ENCODE measurements at regions of chr3 and their contacts with region 1.

Region 1: GRCh38 chr3:45760878-45761711 is 35.2 kb downstream of the SLC6A20 start:
- DNase-seq: peak; percentile 43 to 48
- H3K4me3 ChIP-seq: no peak overlapping the region
- H3K27ac ChIP-seq: no peak overlapping the region
- H3K4me1 ChIP-seq: no peaks in the 10 kb centered on the region
- H3K27me3 ChIP-seq: no peaks in the 10 kb centered on the region
- CTCF ChIP-seq: peak; percentile 81

Region 2: DNA sequence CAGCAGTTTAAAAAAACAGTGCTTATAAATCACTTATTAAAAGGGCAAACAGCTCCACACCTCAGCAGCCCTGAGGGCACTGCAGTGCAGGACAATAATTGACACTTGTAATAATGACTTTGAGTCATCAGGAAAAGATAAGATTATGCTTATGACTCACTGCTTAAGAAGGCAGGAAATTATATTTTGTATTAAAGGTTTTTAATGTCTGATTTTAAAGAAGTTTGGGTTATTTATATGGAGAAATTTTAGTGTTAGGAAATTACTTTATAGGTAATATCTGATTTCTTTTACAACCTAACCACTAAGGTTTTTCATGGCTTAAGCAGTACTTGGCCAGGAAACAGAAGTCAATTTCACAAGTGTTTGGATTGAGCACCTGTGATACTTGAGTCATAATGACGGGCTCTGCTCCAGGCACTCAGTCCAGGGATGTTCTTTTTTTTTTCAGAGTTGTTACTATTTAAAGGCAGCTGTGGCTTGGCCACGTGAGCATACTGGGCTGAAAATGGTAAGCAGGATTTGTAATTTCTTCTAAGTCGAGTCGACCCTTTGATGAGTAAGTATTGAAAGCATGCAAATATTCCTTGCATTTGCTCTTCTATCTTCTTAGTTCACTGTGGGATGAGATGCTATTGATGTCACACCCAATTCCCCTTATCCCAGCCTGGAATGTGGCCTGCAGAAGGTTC is 56.9 kb after region 1 on chr3:
- CTCF ChIA-PET with region 1: no interaction called
- POLR2A ChIA-PET with region 1: no interaction called
- intact Hi-C with region 1: loop called (anchors 5 kb)
- DNase-seq: peak; percentile 69 to 95
- H3K4me3 ChIP-seq: peak overlapping the region; percentile 23; the same call in 1 of the 2 replicates
- H3K27ac ChIP-seq: peak overlapping the region; percentile 94
- H3K4me1 ChIP-seq: peaks cover 42% of the 10 kb centered on the region
- H3K27me3 ChIP-seq: no peaks in the 10 kb centered on the region
- CTCF ChIP-seq: no peak

Region 3: GRCh38 chr3:45832691-45833090 is 71.6 kb after region 1 on chr3:
- CTCF ChIA-PET with region 1: interaction called, 5 read pairs
- POLR2A ChIA-PET with region 1: no interaction called
- intact Hi-C with region 1: loop called (anchors 1 kb)
- DNase-seq: no peak
- H3K4me3 ChIP-seq: no peak overlapping the region
- H3K27ac ChIP-seq: no peak overlapping the region
- H3K4me1 ChIP-seq: no peaks in the 10 kb centered on the region
- H3K27me3 ChIP-seq: no peaks in the 10 kb centered on the region
- CTCF ChIP-seq: peak; percentile 52

Region 4: DNA sequence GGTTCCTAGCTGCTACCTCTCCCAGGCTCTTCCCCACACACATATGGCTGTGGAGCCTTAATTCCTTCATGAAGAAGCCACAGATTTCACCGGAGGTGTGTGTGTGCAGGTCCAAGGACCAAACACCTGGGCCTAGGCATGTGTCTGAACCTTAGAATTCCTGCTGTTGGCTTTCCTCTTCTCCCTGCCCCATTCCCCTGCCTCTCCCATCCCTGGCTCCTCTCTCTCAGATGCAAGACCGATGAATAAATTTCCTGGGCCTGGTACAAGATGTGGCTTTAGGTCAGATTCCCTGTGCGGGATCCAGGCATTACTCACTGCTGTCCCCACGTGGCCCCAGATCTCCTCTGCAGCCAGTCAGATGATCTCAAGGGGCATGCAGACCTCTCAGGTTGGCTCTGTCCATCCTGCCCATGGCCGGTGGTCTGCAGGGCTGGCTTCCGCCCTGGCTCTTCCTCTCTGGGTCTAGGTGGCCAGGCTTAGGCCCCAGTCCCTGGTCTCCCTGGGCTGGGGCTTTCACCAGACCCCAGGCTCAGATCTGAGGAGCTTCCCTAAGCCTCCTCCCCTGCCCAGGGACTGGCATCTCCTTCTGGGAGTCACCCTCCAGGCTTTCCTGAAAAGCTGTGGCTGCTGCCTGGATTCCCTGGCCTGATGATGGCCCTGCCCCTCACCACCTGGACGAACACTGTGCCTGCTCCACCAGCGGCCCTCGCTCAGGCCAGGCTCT is 145.7 kb after region 1 on chr3:
- CTCF ChIA-PET with region 1: no interaction called
- POLR2A ChIA-PET with region 1: no interaction called
- intact Hi-C with region 1: loop called (anchors 5 kb)
- DNase-seq: peak in 1 of 2 experiments; percentile 26
- H3K4me3 ChIP-seq: no peak overlapping the region
- H3K27ac ChIP-seq: no peak overlapping the region
- H3K4me1 ChIP-seq: no peaks in the 10 kb centered on the region
- H3K27me3 ChIP-seq: no peaks in the 10 kb centered on the region
- CTCF ChIP-seq: peak; percentile 29; the same call in 1 of the 2 replicates

Region 5: DNA sequence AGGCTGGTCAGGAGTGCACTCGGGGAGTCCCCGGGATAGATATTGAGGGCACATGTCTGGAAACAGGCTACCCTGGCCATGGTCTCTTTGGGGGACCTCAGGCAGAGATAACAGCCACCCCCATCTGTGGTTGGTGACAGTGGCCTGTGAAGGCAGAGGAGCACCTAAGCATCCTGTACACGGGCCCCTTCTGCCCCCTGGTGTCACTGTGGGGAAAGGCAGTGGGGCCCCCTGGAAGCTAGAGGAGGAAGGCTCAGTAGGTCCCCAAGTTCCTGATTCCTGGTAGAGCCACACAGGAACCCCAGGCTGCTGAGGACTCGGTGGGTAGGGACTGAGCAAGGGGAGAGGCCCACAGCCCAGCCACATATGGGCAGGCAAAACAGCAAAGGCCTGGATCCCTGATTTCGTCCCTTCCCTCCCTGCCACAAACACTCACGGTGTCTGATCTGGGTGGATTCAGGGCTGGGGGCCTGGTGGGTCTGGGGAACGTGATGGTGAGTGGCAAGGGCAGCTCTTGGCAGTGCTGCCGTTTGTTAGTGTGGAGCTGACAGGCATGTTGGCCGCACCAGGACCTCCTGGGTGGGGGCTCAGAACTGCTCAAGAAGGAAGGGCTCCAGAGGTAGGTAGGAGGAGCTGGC is 168.1 kb after region 1 on chr3:
- CTCF ChIA-PET with region 1: interaction called, 6 read pairs
- POLR2A ChIA-PET with region 1: no interaction called
- intact Hi-C with region 1: loop called (anchors 2 kb)
- DNase-seq: peak in 1 of 2 experiments; percentile 52
- H3K4me3 ChIP-seq: no peak overlapping the region
- H3K27ac ChIP-seq: no peak overlapping the region
- H3K4me1 ChIP-seq: no peaks in the 10 kb centered on the region
- H3K27me3 ChIP-seq: no peaks in the 10 kb centered on the region
- CTCF ChIP-seq: peak; percentile 77

Region 6: GRCh38 chr3:46372492-46373359 is 611.6 kb after region 1 on chr3:
- CTCF ChIA-PET with region 1: no interaction called
- POLR2A ChIA-PET with region 1: no interaction called
- intact Hi-C with region 1: loop called (anchors 1 kb)
- DNase-seq: no peak
- H3K4me3 ChIP-seq: no peak overlapping the region
- H3K27ac ChIP-seq: no peak overlapping the region
- H3K4me1 ChIP-seq: peaks cover 19% of the 10 kb centered on the region
- H3K27me3 ChIP-seq: no peaks in the 10 kb centered on the region
- CTCF ChIP-seq: peak; percentile 76